Activated CD8-positive, alpha-beta T cell treated with anti-CD3 and anti-CD28 coated beads for 36 hours (primary cell): ENCODE measurements at regions of chr14 and their contacts with region 1.

Region 1: DNA sequence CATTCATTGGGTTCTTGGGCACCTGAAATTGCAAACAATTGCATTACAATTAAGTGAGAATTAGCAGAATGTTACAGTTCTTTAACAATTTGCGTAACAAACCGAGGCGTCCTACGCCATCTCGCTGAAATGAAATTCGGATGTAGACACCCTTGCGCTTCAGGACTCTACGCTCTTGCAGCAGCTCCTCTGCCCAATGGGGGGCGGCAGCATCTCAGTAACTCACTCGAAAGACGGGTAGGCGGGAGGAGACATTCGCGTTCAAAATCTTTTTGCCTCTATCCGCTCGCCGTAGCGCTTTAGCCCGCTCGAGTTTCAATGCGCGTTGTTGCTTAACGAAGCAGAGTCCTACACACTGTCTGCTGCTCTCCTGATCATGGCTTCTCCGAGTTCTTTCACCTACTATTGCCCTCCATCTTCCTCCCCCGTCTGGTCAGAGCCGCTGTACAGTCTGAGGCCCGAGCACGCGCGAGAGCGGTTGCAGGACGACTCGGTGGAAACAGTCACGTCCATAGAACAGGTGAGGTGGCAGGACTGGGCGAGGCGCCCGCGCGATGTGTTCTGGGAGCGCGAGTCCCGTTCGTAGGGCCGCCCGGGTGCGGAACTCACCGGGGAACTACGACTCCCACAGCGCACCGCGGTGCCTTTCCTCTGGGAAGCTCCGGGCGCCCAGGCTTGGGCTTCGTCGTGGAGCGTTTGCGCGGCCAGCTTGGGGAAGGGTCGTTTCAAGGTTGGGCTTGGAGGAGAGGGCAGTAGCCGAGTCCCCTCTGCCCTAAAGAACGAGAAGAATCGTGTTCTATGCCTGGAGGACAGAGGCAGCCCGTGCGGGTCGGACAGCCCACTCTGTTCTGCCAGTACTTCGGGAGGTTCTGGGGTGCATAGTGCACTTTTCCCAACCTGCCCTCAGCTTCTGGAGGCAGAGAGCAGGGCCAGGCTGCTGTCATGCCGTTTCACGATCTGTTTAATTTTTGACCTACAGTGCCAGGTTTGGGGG is at the start of gene FNTB:
- DNase-seq: peak; percentile 96
- ATAC-seq: peak; percentile 94
- H3K4me3 Mint-ChIP-seq: peak within 1 kb of the TSS; percentile 78
- H3K27ac Mint-ChIP-seq: peak within 1 kb of the TSS; percentile 94
- H3K4me1 Mint-ChIP-seq: peaks cover 43% of the 10 kb centered on the region
- H3K27me3 Mint-ChIP-seq: peaks cover 7% of the 10 kb centered on the region
- CTCF ChIP-seq: peak; percentile 75
- total RNA-seq, gene FNTB: 18.8 to 23.5 TPM

Region 2: GRCh38 chr14:65019944-65020566 is 33.2 kb after region 1 on chr14:
- CTCF ChIA-PET with region 1: interaction called, 18 read pairs
- POLR2A ChIA-PET with region 1: interaction called, 3 read pairs
- intact Hi-C with region 1: no loop called
- DNase-seq: peak; percentile 13
- ATAC-seq: peak; percentile 62
- H3K4me3 Mint-ChIP-seq: no peak overlapping the region
- H3K27ac Mint-ChIP-seq: no peak overlapping the region
- H3K4me1 Mint-ChIP-seq: no peaks in the 10 kb centered on the region
- H3K27me3 Mint-ChIP-seq: no peaks in the 10 kb centered on the region
- CTCF ChIP-seq: peak; percentile 27

Region 3: DNA sequence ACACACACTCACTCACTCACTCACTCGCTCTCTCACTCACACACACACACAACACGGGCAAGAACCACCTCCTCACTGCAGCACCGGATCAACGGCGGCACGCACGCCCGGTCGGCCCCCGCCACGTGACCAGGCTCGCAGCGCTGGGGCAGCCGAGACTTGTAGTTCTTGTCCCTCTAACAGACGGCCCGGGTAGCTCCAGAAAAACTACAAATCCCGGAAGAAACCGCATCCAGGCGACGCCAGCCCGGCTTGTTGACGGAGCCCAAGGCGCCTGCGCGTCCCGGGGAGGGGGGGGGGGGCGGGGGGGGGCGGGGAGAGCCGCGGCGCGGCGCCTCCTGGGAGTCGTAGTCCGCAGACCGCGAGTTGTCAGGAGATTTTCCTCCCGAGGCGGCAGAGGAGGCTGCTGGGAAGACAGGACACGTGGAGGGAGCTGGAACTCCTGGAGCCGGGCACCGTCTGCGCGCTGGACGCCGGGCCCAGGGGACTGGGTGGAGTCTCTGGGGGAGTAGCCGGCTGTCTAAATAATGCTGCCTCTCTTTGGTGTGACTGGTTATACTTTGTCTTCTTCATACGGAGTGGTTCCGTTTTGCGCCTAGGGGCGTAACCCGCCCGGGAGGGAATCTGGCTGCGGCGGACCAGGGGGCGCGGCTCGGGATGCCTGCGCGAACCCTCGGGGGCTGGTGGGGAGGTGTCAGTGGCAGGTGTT is 115.7 kb after region 1 on chr14 and contains the start of gene MAX:
- CTCF ChIA-PET with region 1: interaction called, 4 read pairs
- POLR2A ChIA-PET with region 1: interaction called, 4 read pairs
- intact Hi-C with region 1: loop called (anchors 5 kb)
- DNase-seq: peak; percentile 98
- ATAC-seq: peak; percentile 91
- H3K4me3 Mint-ChIP-seq: peak within 1 kb of the TSS; percentile 90
- H3K27ac Mint-ChIP-seq: peak within 1 kb of the TSS; percentile 98
- H3K4me1 Mint-ChIP-seq: peaks cover 33% of the 10 kb centered on the region
- H3K27me3 Mint-ChIP-seq: no peaks in the 10 kb centered on the region
- CTCF ChIP-seq: no peak
- total RNA-seq, gene MAX: 92.6 to 92.8 TPM